ENCODE measurements at regions of chr10 and their contacts with region 1.

Region 1: GRCh38 chr10:124557648-124558600 is 96.3 kb downstream of the LHPP start:
- DNase-seq: no peak
- H3K4me3 ChIP-seq: no peak overlapping the region
- H3K27ac ChIP-seq: no peak overlapping the region
- H3K4me1 ChIP-seq: no peaks in the 10 kb centered on the region
- H3K27me3 ChIP-seq: no peaks in the 10 kb centered on the region
- CTCF ChIP-seq: no peak

Region 2: GRCh38 chr10:124537907-124538306 is 20.0 kb before region 1 on chr10:
- CTCF ChIA-PET with region 1: interaction called, 12 read pairs
- POLR2A ChIA-PET with region 1: no interaction called
- intact Hi-C with region 1: no loop called
- DNase-seq: no peak
- H3K4me3 ChIP-seq: no peak overlapping the region
- H3K27ac ChIP-seq: no peak overlapping the region
- H3K4me1 ChIP-seq: no peaks in the 10 kb centered on the region
- H3K27me3 ChIP-seq: no peaks in the 10 kb centered on the region
- CTCF ChIP-seq: no peak

Region 3: DNA sequence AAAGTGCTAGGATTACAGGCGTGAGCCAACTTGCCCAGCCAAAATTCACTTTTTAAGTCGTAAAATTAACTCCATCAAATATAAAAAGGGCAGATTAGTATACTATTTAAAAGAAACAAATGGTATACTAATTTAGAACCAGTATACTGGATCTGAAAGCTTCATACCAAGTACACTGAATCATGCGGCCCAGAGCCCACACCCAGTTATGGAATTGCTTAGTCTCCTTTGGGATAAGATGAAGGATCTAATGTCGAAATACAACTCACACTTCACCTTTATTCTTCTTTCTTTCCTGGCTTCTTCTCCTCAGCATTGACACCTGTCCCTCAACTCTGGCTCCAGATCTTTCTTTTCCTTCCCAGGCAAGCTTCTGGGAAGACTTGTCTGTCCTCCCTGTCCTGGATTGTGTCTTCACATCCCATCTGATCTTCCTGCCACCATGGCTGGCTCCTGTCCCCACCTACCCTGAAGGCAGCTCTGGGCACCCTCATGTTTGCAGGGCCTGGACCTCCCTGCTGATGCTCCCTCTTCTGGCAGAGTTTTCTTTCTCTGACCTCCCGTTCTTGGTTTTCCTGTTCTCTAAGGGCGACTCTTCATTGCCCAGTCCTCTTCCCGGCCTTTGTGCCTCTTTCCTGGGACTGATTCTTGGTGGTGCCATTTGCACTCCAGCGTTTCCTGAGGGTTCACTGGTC is 660.2 kb after region 1 on chr10:
- CTCF ChIA-PET with region 1: no interaction called
- POLR2A ChIA-PET with region 1: no interaction called
- intact Hi-C with region 1: no loop called
- DNase-seq: no peak
- H3K4me3 ChIP-seq: no peak overlapping the region
- H3K27ac ChIP-seq: no peak overlapping the region
- H3K4me1 ChIP-seq: no peaks in the 10 kb centered on the region
- H3K27me3 ChIP-seq: no peaks in the 10 kb centered on the region
- CTCF ChIP-seq: no peak